CD8-positive, alpha-beta T cell (primary cell): ENCODE measurements at regions of chr7 and their contacts with region 1.

Region 1: GRCh38 chr7:119046068-119046467 is 821.6 kb downstream of the ANKRD7 start:
- DNase-seq: no peak
- ATAC-seq: no peak
- H3K4me3 ChIP-seq: no peak overlapping the region
- H3K4me3 Mint-ChIP-seq: no peak overlapping the region
- H3K27ac ChIP-seq: no peak overlapping the region
- H3K27ac Mint-ChIP-seq: no peak overlapping the region
- H3K4me1 ChIP-seq: no peaks in the 10 kb centered on the region
- H3K4me1 Mint-ChIP-seq: no peaks in the 10 kb centered on the region
- H3K27me3 ChIP-seq: no peaks in the 10 kb centered on the region
- H3K27me3 Mint-ChIP-seq: no peaks in the 10 kb centered on the region
- CTCF ChIP-seq: no peak

Region 2: GRCh38 chr7:118995350-118995749 is 50.7 kb before region 1 on chr7:
- CTCF ChIA-PET with region 1: no interaction called
- POLR2A ChIA-PET with region 1: no interaction called
- intact Hi-C with region 1: loop called in 1 of 2 experiments (anchors 2 kb)
- DNase-seq: no peak
- ATAC-seq: no peak
- H3K4me3 ChIP-seq: no peak overlapping the region
- H3K4me3 Mint-ChIP-seq: no peak overlapping the region
- H3K27ac ChIP-seq: no peak overlapping the region
- H3K27ac Mint-ChIP-seq: no peak overlapping the region
- H3K4me1 ChIP-seq: no peaks in the 10 kb centered on the region
- H3K4me1 Mint-ChIP-seq: no peaks in the 10 kb centered on the region
- H3K27me3 ChIP-seq: no peaks in the 10 kb centered on the region
- H3K27me3 Mint-ChIP-seq: no peaks in the 10 kb centered on the region
- CTCF ChIP-seq: no peak